Cardiac septum (tissue), 1 donor: ENCODE measurements at regions of chr1 and their contacts with region 1.

Region 1: DNA sequence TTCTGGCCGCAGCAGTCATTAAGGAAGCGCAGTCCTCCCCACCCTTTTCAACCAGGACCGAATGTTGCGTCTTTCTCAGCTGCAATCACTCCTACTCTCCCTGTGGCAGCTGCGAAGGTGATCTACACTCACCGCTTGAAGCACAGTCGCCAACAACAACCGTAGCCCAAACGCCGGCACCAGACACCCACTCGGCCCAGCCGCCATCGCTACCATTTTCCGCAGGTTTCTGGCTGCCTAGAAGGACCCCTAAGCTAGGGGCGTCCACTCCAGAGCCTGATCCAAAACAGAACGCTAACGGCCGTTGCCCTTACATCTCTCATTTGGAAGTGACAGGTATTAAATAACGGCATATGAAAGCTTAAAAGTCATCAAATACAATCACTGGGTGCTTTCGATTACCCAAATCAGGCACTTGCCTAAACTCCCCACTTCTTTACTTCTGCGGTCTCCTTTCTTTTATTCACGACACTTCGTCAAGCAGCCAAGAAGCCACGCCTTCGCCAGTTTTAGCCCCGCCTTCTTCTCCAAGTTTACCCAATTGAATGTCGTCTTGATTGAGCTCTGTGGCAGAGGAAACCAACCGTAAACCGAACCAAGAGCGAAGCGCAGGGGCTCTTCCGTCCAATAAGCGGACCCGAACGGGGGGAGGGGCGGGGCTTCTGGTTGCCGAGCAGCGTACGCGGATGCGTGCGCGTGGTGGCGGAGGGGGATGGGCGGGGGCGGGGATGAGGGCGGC is at the start of gene SELENOF:
- DNase-seq: peak; percentile 97
- total RNA-seq, gene SELENOF: 80.7 TPM

Region 2: GRCh38 chr1:86395771-86396497 is 518.1 kb before region 1 on chr1 and contains the start of gene ODF2L:
- intact Hi-C with region 1: loop called (anchors 10 kb)
- DNase-seq: peak; percentile 98
- total RNA-seq, gene ODF2L: 12.1 TPM

Region 3: GRCh38 chr1:86774305-86775295 is 139.5 kb before region 1 on chr1:
- intact Hi-C with region 1: loop called (anchors 5 kb)
- DNase-seq: peak; percentile 92

Region 4: GRCh38 chr1:86811142-86811924 is 102.7 kb before region 1 on chr1:
- intact Hi-C with region 1: no loop called
- DNase-seq: no peak